ENCODE measurements at regions of chr2 and their contacts with region 1.

Region 1: GRCh38 chr2:182980115-182980514 is 58.1 kb downstream of the NCKAP1 start:
- DNase-seq: no peak
- ATAC-seq: no peak

Region 2: GRCh38 chr2:182761903-182762302 is 218.2 kb before region 1 on chr2:
- intact Hi-C with region 1: loop called (anchors 1 kb)
- DNase-seq: no peak
- ATAC-seq: peak; percentile 76

Region 3: DNA sequence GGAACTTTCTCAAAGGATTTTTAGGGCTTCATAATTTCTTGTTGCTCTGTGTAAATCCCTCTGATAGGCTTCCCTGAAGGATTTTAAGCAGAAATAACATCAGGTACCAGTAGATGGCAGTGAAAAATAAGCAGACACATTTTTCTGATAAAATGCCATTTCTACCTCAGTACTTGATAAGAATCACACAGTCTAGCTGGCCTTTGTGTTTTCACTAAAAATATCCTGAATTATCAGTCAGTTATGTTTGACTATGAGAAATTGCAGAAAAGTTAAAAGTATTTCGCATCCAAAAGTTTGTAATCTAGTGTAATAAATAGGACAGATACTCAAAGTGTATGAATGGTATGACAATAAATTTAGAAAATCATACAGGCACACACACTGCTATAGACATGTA is 195.3 kb before region 1 on chr2:
- intact Hi-C with region 1: loop called (anchors 5 kb)
- DNase-seq: no peak
- ATAC-seq: no peak

Region 4: DNA sequence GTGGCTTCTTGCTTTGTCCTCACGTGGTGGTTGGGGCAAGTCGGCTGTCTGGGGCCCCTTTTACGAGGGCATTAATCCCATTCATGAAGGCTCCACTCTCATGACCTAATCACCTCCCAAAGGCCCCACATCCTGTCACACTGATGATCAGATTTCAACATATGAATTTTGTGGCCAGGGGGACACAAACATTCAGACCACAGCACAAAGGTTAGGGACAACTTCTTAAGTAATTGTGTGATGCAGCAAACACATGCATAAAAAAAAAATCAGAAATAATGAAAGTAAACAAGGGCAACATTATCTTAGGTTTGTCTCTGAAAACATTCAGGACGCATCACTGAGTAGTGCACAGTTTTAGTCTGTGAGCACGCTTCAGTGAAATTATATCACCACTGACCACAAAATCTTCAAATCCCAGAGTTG is 59.5 kb before region 1 on chr2:
- intact Hi-C with region 1: loop called (anchors 10 kb)
- DNase-seq: no peak
- ATAC-seq: no peak

Region 5: DNA sequence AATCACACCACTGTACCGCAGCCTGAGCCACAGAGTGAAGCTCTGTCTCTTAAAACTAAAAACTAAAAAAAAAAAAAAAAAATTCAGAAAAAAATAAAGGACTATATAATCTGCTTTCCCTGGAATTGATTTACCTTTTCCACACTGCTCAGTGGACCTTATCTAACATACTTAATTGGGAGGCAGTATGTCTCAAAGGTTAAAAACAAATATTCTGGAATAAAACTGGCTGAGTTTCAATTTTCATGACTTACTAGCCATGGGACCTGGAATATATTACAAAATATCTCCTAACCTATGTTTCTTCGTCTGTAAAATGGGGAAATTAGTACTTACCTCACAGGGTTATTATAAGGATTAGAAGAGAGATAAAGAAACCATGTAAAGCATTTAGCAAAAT is 46.3 kb after region 1 on chr2:
- intact Hi-C with region 1: loop called (anchors 1 kb)
- DNase-seq: no peak
- ATAC-seq: no peak

Measured in Right ventricle myocardium inferior (tissue), 1 donor.